ENCODE measurements at regions of chr7 and their contacts with region 1.

Region 1: GRCh38 chr7:108848486-108848885 is 278.8 kb downstream of the DNAJB9 start:
- DNase-seq: no peak

Region 2: DNA sequence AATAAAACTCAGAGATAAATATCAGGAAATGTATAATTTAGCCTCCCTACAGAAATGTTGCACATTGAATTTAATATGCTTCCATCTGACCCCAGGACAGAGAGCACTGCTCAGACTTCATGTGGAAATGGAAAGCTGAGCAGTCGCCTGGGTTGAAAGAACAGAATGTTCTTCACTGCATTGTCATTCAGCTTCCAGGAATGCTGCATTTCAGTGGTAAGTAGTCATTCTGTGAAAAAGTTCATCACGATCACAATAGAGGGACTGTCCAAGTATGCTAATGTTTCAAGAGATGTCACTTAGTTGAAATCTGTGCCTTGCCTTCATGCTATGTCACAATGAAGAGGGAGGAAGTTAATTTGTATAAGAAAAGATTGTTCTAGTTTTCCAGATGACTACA is 539.6 kb before region 1 on chr7:
- intact Hi-C with region 1: loop called in 1 of 2 experiments (anchors 5 kb)
- DNase-seq: no peak

Region 3: DNA sequence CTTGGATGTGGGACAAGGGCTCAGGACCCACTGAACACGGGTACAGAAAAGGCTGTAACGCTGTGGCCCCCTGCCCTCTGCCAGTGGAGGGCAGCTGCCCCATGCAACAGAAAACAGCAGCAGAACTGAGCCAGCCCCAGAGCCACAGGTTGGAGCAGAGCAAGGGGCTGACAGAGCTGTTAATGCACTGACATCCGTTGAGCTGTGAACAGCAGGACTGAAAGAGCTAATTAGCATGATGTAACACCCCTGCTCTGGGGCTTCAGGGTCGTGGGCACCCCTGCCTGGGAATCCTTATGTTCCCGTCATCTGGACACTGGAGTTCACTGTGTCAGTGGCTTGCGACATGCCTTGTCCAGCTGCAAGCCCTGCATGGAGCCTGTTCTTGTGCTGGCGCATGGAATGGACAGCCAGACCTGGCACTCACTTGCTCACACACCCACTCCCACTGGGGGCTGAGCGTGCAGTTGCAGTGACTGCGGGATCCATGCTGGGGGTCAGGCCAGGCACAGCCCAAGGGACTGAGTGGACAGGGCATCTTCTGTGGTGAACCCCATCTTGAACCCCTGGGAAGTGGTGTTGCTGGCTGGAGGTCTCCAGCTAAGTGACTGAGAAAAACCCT is 14.9 kb after region 1 on chr7:
- intact Hi-C with region 1: loop called in 1 of 2 experiments (anchors 1 kb)
- DNase-seq: no peak

Measured in posterior vena cava (tissue), 2 donors.